B cell (primary cell): ENCODE measurements at regions of chr17 and their contacts with region 1.

Region 1: GRCh38 chr17:18291718-18292540 is 22.9 kb downstream of the TOP3A start:
- DNase-seq: no peak
- ATAC-seq: no peak
- H3K4me3 ChIP-seq: no peak overlapping the region
- H3K4me3 Mint-ChIP-seq: no peak overlapping the region
- H3K27ac ChIP-seq: no peak overlapping the region
- H3K27ac Mint-ChIP-seq: no peak overlapping the region
- H3K4me1 ChIP-seq: peaks cover 6% of the 10 kb centered on the region in 2 donors
- H3K4me1 Mint-ChIP-seq: peaks cover 10% of the 10 kb centered on the region
- H3K27me3 ChIP-seq: no peaks in the 10 kb centered on the region
- H3K27me3 Mint-ChIP-seq: no peaks in the 10 kb centered on the region
- CTCF ChIP-seq: no peak

Region 2: GRCh38 chr17:18257982-18258355 is 34.0 kb before region 1 on chr17:
- CTCF ChIA-PET with region 1: no interaction called
- POLR2A ChIA-PET with region 1: no interaction called
- intact Hi-C with region 1: no loop called
- DNase-seq: peak; percentile 64
- ATAC-seq: peak; percentile 32
- H3K4me3 ChIP-seq: peak overlapping the region; percentile 41 to 99 (median 93)
- H3K4me3 Mint-ChIP-seq: peak overlapping the region; percentile 98
- H3K27ac ChIP-seq: peak overlapping the region; percentile 65 to 86
- H3K27ac Mint-ChIP-seq: peak overlapping the region; percentile 92
- H3K4me1 ChIP-seq: peaks cover 28 to 43% of the 10 kb centered on the region in 2 donors
- H3K4me1 Mint-ChIP-seq: peaks cover 31% of the 10 kb centered on the region
- H3K27me3 ChIP-seq: no peaks in the 10 kb centered on the region
- H3K27me3 Mint-ChIP-seq: no peaks in the 10 kb centered on the region
- CTCF ChIP-seq: no peak

Region 3: DNA sequence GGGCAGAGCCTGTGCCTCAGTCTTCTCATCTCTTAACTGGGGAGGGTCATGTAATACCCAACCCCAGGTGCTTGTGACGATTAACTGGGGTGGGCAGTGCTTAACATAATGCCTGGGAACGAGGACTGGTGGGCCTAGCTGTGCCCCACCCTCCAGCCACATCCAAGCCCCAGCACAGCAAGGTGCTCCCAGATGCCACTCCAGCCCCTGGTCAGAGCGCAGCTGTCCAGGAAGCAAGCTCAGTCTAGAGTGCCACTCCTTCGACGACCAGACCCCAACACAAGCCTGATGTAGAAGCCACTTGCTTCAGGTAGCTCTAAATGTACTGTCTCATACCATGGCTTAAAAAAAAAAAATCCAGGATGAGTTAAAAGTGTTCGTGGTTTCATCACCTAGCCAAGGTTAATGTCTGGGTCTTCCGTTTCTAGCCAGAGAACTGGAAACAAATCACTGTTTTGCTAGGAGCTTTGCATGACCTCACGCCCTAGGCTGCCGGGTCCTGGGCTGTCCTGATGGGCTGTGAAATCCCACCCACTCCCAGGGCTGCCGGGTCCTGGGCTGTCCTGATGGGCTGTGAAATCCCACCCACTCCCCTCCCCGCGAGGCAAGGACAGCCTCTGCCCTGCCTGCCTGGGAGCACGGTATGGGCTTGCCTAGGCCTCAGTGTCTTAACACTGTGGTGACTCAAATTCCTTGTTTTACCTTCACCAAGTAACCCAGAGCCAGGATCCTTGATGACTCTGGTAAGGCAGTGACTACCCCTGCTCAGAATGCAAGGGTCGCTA is 23.8 kb before region 1 on chr17:
- CTCF ChIA-PET with region 1: no interaction called
- POLR2A ChIA-PET with region 1: no interaction called
- intact Hi-C with region 1: no loop called
- DNase-seq: no peak
- ATAC-seq: no peak
- H3K4me3 ChIP-seq: no peak overlapping the region
- H3K4me3 Mint-ChIP-seq: no peak overlapping the region
- H3K27ac ChIP-seq: no peak overlapping the region
- H3K27ac Mint-ChIP-seq: no peak overlapping the region
- H3K4me1 ChIP-seq: no peaks in the 10 kb centered on the region
- H3K4me1 Mint-ChIP-seq: no peaks in the 10 kb centered on the region
- H3K27me3 ChIP-seq: no peaks in the 10 kb centered on the region
- H3K27me3 Mint-ChIP-seq: no peaks in the 10 kb centered on the region
- CTCF ChIP-seq: no peak

Region 4: GRCh38 chr17:18344021-18344420 is 52.1 kb after region 1 on chr17:
- CTCF ChIA-PET with region 1: no interaction called
- POLR2A ChIA-PET with region 1: interaction called, 11 read pairs
- intact Hi-C with region 1: no loop called
- DNase-seq: no peak
- ATAC-seq: no peak
- H3K4me3 ChIP-seq: no peak overlapping the region
- H3K4me3 Mint-ChIP-seq: no peak overlapping the region
- H3K27ac ChIP-seq: no peak overlapping the region
- H3K27ac Mint-ChIP-seq: no peak overlapping the region
- H3K4me1 ChIP-seq: no peaks in the 10 kb centered on the region
- H3K4me1 Mint-ChIP-seq: no peaks in the 10 kb centered on the region
- H3K27me3 ChIP-seq: no peaks in the 10 kb centered on the region
- H3K27me3 Mint-ChIP-seq: no peaks in the 10 kb centered on the region
- CTCF ChIP-seq: no peak

Region 5: DNA sequence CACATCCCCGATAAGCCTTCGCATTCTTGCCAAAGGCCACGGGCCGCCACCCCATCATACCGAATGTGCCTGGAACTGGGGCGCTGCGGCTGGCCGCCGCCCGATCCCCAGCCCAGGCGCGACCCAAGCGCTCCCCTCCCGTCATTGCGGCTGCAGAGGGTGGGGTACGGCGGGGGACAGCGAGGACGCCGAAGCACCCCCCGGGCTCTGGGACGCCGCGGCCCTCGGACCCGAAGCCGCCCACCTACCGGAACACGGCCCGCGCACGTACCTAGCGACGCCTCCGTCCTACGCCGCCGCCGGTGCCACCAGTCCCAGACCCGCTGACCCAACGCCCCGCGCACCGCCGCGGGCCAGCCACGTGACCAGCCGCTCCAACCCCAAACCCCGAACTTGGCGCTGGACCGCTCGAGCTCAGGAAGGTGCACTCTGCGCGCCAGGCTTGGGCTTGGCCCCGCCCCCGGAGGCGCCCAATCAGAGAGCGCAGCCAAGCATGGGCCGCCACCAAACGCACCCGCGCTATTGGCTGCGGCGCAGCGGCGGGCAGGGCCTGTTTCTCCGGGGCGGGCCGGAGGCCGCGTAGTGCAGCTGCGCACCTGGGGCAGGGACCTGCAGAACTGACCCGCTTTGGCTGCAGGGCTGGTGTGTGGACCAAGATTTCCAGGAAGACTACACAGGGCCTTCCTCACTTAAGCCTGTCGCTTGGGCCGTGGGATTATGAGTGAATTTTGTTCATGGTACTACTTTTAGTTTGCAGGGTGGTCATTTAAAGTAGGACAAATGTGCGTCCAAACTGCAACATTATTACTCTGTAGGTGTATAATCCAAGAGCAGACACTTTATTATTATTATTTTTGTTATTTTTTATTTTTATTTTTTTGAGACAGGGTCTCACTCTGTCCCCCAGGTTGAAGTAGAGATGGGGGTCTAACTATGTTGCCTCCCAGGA is 71.4 kb after region 1 on chr17 and contains the start of gene SHMT1:
- CTCF ChIA-PET with region 1: no interaction called
- POLR2A ChIA-PET with region 1: no interaction called
- intact Hi-C with region 1: no loop called
- DNase-seq: peak; percentile 91
- ATAC-seq: peak; percentile 100
- H3K4me3 ChIP-seq: peak within 1 kb of the TSS; percentile 47 to 89 (median 66)
- H3K4me3 Mint-ChIP-seq: peak within 1 kb of the TSS; percentile 95
- H3K27ac ChIP-seq: peak within 1 kb of the TSS in 1 of 2 donors; percentile 32
- H3K27ac Mint-ChIP-seq: peak within 1 kb of the TSS; percentile 89
- H3K4me1 ChIP-seq: peaks cover 5 to 14% of the 10 kb centered on the region in 2 donors
- H3K4me1 Mint-ChIP-seq: peaks cover 14% of the 10 kb centered on the region
- H3K27me3 ChIP-seq: no peaks in the 10 kb centered on the region
- H3K27me3 Mint-ChIP-seq: no peaks in the 10 kb centered on the region
- CTCF ChIP-seq: no peak
- total RNA-seq, gene SHMT1: 23.5 and 28.0 TPM in 2 replicates